ENCODE measurements at regions of chr20 and their contacts with region 1.

Region 1: GRCh38 chr20:32743237-32744112 is at the start of gene COMMD7:
- DNase-seq: peak; percentile 78
- ATAC-seq: peak; percentile 81
- H3K4me3 Mint-ChIP-seq: peak within 1 kb of the TSS; percentile 97
- H3K27ac Mint-ChIP-seq: peak within 1 kb of the TSS; percentile 99
- H3K4me1 Mint-ChIP-seq: peaks cover 32% of the 10 kb centered on the region
- H3K27me3 Mint-ChIP-seq: no peaks in the 10 kb centered on the region
- total RNA-seq, gene COMMD7: 52.6 to 55.6 TPM

Region 2: DNA sequence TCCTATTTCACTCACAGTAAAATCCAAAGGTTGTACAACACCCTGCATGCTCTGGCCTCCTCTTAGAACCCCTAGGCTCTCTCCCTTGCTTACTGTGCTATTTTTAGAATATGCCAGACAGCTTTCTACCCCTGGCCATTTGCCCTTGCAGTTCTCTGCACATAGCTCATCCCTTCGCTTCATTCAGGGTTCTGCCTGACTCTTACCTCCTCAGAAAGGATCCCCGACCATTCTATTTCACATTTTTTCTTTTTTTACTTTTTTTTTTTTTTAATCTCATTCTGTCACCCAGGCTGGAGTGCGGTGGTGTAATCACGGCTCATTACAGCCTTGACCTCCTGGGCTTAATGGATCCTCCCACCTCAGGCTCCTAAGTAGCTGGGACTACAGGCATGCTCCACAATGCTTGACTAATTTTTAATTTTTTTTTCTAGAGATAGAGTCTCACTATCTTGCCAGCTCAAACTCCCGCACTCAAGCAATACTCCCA is 33.8 kb before region 1 on chr20:
- POLR2A ChIA-PET with region 1: no interaction called
- DNase-seq: no peak
- ATAC-seq: no peak
- H3K4me3 Mint-ChIP-seq: no peak overlapping the region
- H3K27ac Mint-ChIP-seq: no peak overlapping the region
- H3K4me1 Mint-ChIP-seq: peaks cover 6% of the 10 kb centered on the region
- H3K27me3 Mint-ChIP-seq: no peaks in the 10 kb centered on the region

Region 3: DNA sequence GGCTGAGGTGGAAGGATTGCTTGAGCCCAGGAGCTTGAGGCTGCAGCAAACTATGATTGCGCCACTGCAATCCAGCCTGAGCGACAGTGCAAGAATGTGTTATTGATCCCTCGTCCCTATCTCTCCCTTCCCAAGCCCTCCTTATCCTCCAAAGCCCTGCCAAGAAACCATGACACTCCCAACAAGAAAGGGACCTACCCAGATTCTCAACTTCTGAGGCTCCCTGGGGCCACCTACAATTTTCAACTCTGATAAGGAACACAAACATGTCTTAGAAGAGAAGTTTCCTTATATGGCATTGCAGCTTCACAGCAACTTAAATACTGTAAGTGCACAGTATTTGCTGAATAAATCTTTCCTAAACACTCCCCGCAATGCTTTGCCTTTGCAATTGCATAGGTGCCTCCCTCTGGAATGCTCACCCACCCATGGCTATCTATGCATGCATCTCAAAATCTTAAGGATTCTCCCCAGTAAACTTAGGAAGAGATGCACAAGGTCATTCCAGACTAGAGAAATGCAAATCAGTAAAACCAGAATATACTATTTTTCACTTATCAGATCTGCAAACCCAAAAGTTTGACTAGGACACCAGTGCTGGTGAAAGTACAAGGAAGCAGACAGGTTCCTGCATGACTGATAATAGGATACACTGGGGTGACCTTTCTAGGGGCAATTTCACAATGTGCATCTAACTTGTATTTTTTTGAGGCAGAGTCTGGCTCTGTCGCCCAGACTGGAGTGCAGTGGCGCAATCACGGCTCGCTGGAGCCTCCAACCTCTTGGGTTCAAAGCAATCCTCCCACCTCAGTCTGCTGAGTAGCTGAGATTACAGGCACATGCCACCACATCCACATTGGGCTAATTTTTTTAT is 11.8 kb before region 1 on chr20:
- POLR2A ChIA-PET with region 1: interaction called, 16 read pairs
- DNase-seq: no peak
- ATAC-seq: no peak
- H3K4me3 Mint-ChIP-seq: no peak overlapping the region
- H3K27ac Mint-ChIP-seq: peak overlapping the region; percentile 55
- H3K4me1 Mint-ChIP-seq: peaks cover 20% of the 10 kb centered on the region
- H3K27me3 Mint-ChIP-seq: no peaks in the 10 kb centered on the region

Region 4: GRCh38 chr20:32772046-32772445 is 28.6 kb after region 1 on chr20:
- POLR2A ChIA-PET with region 1: interaction called, 13 read pairs
- DNase-seq: no peak
- ATAC-seq: peak; percentile 30
- H3K4me3 Mint-ChIP-seq: no peak overlapping the region
- H3K27ac Mint-ChIP-seq: no peak overlapping the region
- H3K4me1 Mint-ChIP-seq: peaks cover 30% of the 10 kb centered on the region
- H3K27me3 Mint-ChIP-seq: no peaks in the 10 kb centered on the region

Measured in activated naive CD8-positive, alpha-beta T cell treated with anti-CD3 and anti-CD28 coated beads, Interleukin-2, amount 10 ng/mL, durations not matched to agents 7 days and 5 days (primary cell).